Stomach (tissue), 19 donors: ENCODE measurements at regions of chr11 and their contacts with region 1.

Region 1: GRCh38 chr11:8219257-8220021 is 44.2 kb downstream of the LMO1 start:
- DNase-seq: peak; percentile 64 to 70
- H3K4me3 ChIP-seq: no peak overlapping the region
- H3K27ac ChIP-seq: no peak overlapping the region
- H3K4me1 ChIP-seq: no peaks in the 10 kb centered on the region
- H3K27me3 ChIP-seq: peaks cover 0 to 4% (median 0%) of the 10 kb centered on the region in 3 donors
- CTCF ChIP-seq: peak in 4 of 7 experiments; percentile 36 to 58 (median 42)
- EP300 ChIP-seq: no peak
- POLR2A ChIP-seq: no peak

Region 2: GRCh38 chr11:8566613-8567210 is 347.3 kb after region 1 on chr11:
- intact Hi-C with region 1: loop called (anchors 5 kb)
- DNase-seq: peak in 1 of 2 donors; percentile 66
- H3K4me3 ChIP-seq: no peak overlapping the region
- H3K27ac ChIP-seq: no peak overlapping the region
- H3K4me1 ChIP-seq: no peaks in the 10 kb centered on the region
- H3K27me3 ChIP-seq: no peaks in the 10 kb centered on the region
- CTCF ChIP-seq: peak in 5 of 7 experiments; percentile 34 to 68 (median 58)
- EP300 ChIP-seq: no peak
- POLR2A ChIP-seq: no peak